Endothelial cell of umbilical vein (primary cell): ENCODE measurements at regions of chr12 and their contacts with region 1.

Region 1: DNA sequence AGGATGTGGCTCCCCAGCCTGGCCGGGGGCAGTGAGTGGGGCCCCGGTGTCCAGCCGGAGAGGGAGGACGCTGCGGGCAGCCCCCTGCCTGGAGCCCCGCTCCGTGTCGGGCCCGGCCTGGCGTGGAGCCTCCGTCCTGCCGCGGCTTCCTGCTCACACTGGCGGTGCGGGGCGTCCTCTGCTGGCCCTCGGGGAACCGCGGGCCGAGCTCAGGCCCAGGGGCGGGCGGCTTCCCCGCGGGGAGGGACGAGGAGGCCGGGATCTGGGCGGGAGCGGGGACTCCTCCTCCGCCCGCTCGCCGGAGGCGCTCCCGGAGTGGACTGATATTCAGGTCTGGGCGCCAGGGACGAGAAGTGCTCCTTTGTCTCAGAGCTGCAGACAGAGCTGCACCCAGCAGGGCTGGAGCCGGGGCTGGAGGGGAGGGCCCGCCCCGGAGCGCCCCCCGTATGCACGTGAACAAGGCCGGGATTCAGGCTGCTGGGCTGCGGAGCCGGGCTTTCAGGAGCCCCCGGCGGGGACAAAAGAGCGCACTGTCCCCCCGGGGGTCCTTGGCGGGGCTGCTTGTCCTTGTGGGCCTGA is 2.2 kb downstream of the MMP17 start:
- DNase-seq: peak; percentile 70
- H3K4me3 ChIP-seq: peak overlapping the region; percentile 30 to 53 (median 35)
- H3K27ac ChIP-seq: no peak overlapping the region
- H3K4me1 ChIP-seq: peaks cover 12% of the 10 kb centered on the region
- H3K27me3 ChIP-seq: peaks cover 0 to 6% of the 10 kb centered on the region in 2 experiments
- CTCF ChIP-seq: peak; percentile 62 to 74
- POLR2A ChIP-seq: no peak

Region 2: DNA sequence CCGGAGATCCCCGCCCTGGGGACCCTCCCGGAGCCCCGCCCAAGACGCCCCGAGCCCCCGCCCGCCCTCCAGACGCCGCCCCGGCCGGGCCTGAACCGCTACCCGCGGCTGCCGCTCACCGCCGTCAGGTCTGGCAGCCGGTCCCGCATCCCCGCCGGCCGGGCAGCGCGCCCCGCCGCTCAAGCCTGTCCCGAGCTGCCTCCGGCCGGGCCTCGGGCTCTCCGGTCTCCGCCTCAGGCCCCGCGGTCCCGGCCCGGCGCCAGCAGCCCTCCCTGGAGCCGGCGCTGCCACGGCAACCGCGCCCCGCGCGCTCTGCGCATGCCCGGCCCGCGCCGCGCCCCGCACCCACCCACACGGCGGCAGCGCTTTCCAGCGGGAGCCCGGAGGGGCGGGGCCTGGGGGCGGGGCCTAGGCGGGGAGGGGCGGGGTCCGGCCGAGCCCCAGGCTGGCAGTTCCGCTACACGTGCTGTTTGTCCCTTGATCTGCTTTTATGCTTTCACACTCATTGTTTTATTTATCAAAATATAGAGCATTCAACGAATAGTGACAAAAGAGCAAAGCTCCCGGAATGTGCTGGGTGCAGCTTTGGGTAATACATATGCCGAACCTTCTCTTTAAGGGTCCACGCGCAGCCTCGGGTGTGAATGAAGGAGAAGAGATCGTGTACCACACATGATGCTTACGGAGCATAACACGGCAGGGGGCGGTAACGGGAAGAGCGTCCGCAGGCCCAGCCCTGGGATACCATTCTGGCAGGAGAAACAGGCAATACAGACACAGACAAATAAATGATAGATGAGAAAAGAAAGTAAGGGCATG is 991.3 kb before region 1 on chr12 and contains the start of gene STX2:
- CTCF ChIA-PET with region 1: no interaction called
- POLR2A ChIA-PET with region 1: no interaction called
- dilution Hi-C with region 1: no loop called
- intact Hi-C with region 1: loop called (anchors 5 kb)
- DNase-seq: peak; percentile 88
- H3K4me3 ChIP-seq: peak within 1 kb of the TSS; percentile 78 to 96 (median 87)
- H3K27ac ChIP-seq: no peak within 1 kb of the TSS
- H3K4me1 ChIP-seq: peaks cover 5% of the 10 kb centered on the region
- H3K27me3 ChIP-seq: no peaks in the 10 kb centered on the region
- CTCF ChIP-seq: peak; percentile 13 to 44
- POLR2A ChIP-seq: no peak
- total RNA-seq, gene STX2: 30.7 and 32.6 TPM in 2 replicates

Region 3: GRCh38 chr12:131104463-131105350 is 725.7 kb before region 1 on chr12:
- CTCF ChIA-PET with region 1: interaction called, 29 read pairs
- POLR2A ChIA-PET with region 1: no interaction called
- dilution Hi-C with region 1: no loop called
- intact Hi-C with region 1: loop called (anchors 1 kb)
- DNase-seq: peak; percentile 28
- H3K4me3 ChIP-seq: no peak overlapping the region
- H3K27ac ChIP-seq: no peak overlapping the region
- H3K4me1 ChIP-seq: no peaks in the 10 kb centered on the region
- H3K27me3 ChIP-seq: no peaks in the 10 kb centered on the region
- CTCF ChIP-seq: peak; percentile 82 to 87
- POLR2A ChIP-seq: no peak

Region 4: GRCh38 chr12:131737142-131737827 is 93.1 kb before region 1 on chr12:
- CTCF ChIA-PET with region 1: interaction called, 10 read pairs
- POLR2A ChIA-PET with region 1: no interaction called
- dilution Hi-C with region 1: no loop called
- intact Hi-C with region 1: loop called (anchors 2 kb)
- DNase-seq: peak; percentile 29
- H3K4me3 ChIP-seq: peak overlapping the region in 1 of 3 experiments; percentile 19
- H3K27ac ChIP-seq: peak overlapping the region; percentile 61
- H3K4me1 ChIP-seq: peaks cover 10% of the 10 kb centered on the region
- H3K27me3 ChIP-seq: no peaks in the 10 kb centered on the region
- CTCF ChIP-seq: no peak
- POLR2A ChIP-seq: no peak

Region 5: DNA sequence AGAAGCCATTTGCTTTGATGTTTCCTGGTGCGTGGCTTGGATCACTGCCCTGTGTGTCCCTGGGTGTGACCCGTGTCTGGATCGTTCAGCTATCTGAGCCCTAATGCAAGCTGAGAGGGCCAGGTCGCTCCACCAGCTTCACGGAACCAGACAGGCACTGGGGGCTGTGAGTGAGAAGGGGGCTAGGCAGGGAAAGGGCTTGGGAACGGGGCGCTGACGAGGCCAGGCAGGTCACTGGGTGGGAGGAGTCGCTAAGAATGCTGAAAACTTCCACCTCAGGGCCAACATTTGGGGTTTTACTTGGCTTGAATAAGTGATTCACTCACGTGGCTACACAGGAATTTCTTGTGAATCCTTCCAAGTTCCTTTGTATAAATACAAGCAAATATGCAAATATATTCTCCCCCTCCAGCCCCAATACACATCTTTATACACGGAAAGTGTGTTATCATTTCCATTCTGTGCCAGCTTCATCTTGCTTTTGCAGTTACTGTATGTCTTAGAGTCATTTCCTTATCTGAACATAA is 26.4 kb before region 1 on chr12:
- CTCF ChIA-PET with region 1: interaction called, 5 read pairs
- POLR2A ChIA-PET with region 1: no interaction called
- dilution Hi-C with region 1: no loop called
- intact Hi-C with region 1: loop called (anchors 2 kb)
- DNase-seq: peak; percentile 79
- H3K4me3 ChIP-seq: no peak overlapping the region
- H3K27ac ChIP-seq: peak overlapping the region; percentile 35
- H3K4me1 ChIP-seq: peaks cover 8% of the 10 kb centered on the region
- H3K27me3 ChIP-seq: no peaks in the 10 kb centered on the region
- CTCF ChIP-seq: no peak
- POLR2A ChIP-seq: no peak

Region 6: GRCh38 chr12:132003846-132004245 is 173.4 kb after region 1 on chr12:
- CTCF ChIA-PET with region 1: interaction called, 26 read pairs
- POLR2A ChIA-PET with region 1: no interaction called
- dilution Hi-C with region 1: no loop called
- intact Hi-C with region 1: no loop called
- DNase-seq: peak; percentile 62
- H3K4me3 ChIP-seq: no peak overlapping the region
- H3K27ac ChIP-seq: peak overlapping the region; percentile 76
- H3K4me1 ChIP-seq: peaks cover 8% of the 10 kb centered on the region
- H3K27me3 ChIP-seq: no peaks in the 10 kb centered on the region
- CTCF ChIP-seq: no peak
- POLR2A ChIP-seq: no peak